ENCODE measurements at regions of chr20 and their contacts with region 1.

Region 1: GRCh38 chr20:18412221-18412901 is 54.5 kb downstream of the DZANK1 start:
- DNase-seq: peak in 1 of 14 experiments; percentile 4
- ATAC-seq: no peak
- H3K4me3 ChIP-seq: no peak overlapping the region
- H3K4me3 Mint-ChIP-seq: no peak overlapping the region
- H3K27ac ChIP-seq: no peak overlapping the region
- H3K27ac Mint-ChIP-seq: no peak overlapping the region
- H3K4me1 ChIP-seq: no peaks in the 10 kb centered on the region
- H3K4me1 Mint-ChIP-seq: no peaks in the 10 kb centered on the region
- H3K27me3 ChIP-seq: no peaks in the 10 kb centered on the region
- H3K27me3 Mint-ChIP-seq: no peaks in the 10 kb centered on the region
- CTCF ChIP-seq: no peak

Region 2: DNA sequence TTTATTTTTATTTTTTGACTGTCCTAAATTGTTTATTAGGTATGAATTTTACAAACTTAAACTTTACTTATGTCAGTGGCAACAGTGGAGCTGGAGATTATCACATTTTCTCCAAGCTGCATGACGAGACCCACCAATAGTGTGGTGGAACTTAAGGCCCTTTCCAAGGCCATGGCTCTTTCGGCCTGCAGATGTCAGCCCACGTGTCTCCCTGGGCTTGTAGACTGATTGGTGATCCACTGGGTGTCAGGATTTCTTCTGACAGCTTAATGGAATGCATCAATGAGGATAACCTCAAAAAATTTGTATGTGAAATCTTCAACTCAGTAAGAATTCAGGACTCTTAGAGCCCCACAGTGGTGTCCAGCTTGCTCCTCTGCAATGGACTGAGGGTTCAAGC is 322.3 kb before region 1 on chr20:
- CTCF ChIA-PET with region 1: no interaction called
- POLR2A ChIA-PET with region 1: no interaction called
- intact Hi-C with region 1: no loop called
- DNase-seq: no peak
- ATAC-seq: no peak
- H3K4me3 ChIP-seq: no peak overlapping the region
- H3K4me3 Mint-ChIP-seq: no peak overlapping the region
- H3K27ac ChIP-seq: no peak overlapping the region
- H3K27ac Mint-ChIP-seq: no peak overlapping the region
- H3K4me1 ChIP-seq: no peaks in the 10 kb centered on the region
- H3K4me1 Mint-ChIP-seq: no peaks in the 10 kb centered on the region
- H3K27me3 ChIP-seq: peaks cover 3 to 5% of the 10 kb centered on the region in 2 experiments
- H3K27me3 Mint-ChIP-seq: peaks cover 18% of the 10 kb centered on the region
- CTCF ChIP-seq: no peak

Region 3: DNA sequence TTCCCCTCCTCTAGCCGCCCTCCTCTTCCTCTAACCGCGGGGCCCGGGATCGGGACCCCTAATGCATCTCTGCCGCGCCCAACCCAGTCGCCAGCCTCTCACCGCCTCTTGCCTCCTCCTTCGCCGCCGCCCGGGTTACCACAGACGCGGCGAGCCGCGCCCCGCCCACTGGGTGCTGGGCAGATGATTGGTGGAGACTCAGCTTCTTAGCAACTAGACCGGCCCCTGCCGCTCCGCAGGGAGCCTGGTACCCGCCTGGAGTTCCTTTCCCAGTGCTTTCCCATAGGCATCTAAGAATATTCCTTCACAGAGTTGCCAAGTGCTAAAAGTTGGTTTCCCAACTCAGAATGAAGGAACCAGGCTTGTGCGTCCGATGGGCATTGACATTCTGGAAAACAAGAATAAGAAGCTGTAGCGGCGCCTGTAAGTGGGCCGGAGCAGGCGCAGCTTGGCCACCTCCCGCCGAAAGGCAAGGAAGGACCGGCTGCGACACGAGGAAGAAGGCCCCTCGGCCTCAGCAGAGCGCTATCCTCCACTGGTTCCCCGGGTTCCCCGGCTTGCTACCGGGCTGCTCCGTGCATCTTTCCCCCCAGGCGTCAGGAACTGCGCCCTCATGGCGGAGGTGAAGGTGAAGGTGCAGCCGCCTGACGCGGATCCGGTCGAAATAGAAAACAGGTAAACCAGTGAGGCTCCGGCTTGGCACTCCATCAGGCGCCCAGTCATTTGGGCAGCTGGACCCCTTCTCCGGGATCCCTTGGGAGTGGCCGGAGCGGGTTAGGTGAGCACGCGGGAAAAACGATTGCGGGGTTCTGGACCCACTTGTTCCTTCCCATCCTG is 54.8 kb after region 1 on chr20 and contains the starts of genes DZANK1 and POLR3F:
- CTCF ChIA-PET with region 1: no interaction called
- POLR2A ChIA-PET with region 1: no interaction called
- intact Hi-C with region 1: loop called in 1 of 2 experiments (anchors 1 kb)
- DNase-seq: peak; percentile 84 to 96 (median 90)
- ATAC-seq: peak; percentile 89
- H3K4me3 ChIP-seq: peak within 1 kb of the TSS; percentile 95
- H3K4me3 Mint-ChIP-seq: peak within 1 kb of the TSS; percentile 96
- H3K27ac ChIP-seq: peak within 1 kb of the TSS; percentile 77 to 91
- H3K27ac Mint-ChIP-seq: peak within 1 kb of the TSS; percentile 96
- H3K4me1 ChIP-seq: peaks cover 17% of the 10 kb centered on the region
- H3K4me1 Mint-ChIP-seq: peaks cover 39% of the 10 kb centered on the region
- H3K27me3 ChIP-seq: no peaks in the 10 kb centered on the region
- H3K27me3 Mint-ChIP-seq: no peaks in the 10 kb centered on the region
- CTCF ChIP-seq: no peak
- total RNA-seq, gene DZANK1: 1.8 to 1.9 TPM
- total RNA-seq, gene POLR3F: 7.9 to 8.8 TPM

Region 4: GRCh38 chr20:18524646-18525045 is 112.3 kb after region 1 on chr20:
- CTCF ChIA-PET with region 1: no interaction called
- POLR2A ChIA-PET with region 1: no interaction called
- intact Hi-C with region 1: loop called in 1 of 2 experiments (anchors 5 kb)
- DNase-seq: no peak
- ATAC-seq: no peak
- H3K4me3 ChIP-seq: no peak overlapping the region
- H3K4me3 Mint-ChIP-seq: no peak overlapping the region
- H3K27ac ChIP-seq: no peak overlapping the region
- H3K27ac Mint-ChIP-seq: no peak overlapping the region
- H3K4me1 ChIP-seq: no peaks in the 10 kb centered on the region
- H3K4me1 Mint-ChIP-seq: no peaks in the 10 kb centered on the region
- H3K27me3 ChIP-seq: no peaks in the 10 kb centered on the region
- H3K27me3 Mint-ChIP-seq: no peaks in the 10 kb centered on the region
- CTCF ChIP-seq: no peak

Region 5: DNA sequence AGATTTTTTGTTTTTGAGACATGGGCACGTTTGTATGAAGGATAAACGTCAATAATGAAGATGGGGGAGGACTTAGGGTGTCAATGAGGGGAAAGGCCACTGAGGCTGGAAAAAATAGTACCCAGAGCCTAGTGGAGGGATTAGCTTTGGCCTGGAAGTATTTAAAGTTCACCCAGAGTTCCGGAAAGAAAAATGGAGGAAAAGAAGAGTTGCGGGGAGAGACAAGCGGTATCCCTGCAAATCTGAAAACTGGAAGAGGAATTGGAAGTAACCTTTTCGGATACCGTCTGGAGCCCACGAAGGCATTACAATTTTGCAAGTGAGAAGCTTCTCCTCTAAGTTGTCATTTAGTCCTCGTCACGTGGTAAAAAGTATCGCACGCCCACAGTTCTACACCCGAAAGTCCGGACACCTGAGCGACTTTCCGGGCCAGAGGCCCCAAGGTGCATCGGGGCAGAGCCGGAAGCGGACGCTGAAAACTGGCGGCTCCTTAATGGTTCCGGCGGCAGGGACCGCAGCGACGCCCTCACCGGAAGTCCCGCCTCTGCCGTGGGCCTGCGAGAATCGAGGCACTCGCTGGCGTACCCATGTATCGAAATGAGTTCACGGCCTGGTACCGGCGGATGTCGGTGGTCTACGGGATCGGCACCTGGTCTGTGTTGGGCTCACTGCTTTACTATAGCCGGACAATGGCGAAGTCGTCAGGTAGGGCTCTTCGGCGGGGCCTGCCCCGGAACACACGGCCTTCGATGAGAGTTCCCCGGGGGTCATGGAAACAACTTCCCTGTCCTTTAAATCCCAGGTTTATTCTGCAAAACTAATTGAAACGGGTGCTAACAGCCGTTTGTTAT is 154.8 kb after region 1 on chr20 and contains the start of gene SMIM26:
- CTCF ChIA-PET with region 1: no interaction called
- POLR2A ChIA-PET with region 1: no interaction called
- intact Hi-C with region 1: loop called in 1 of 2 experiments (anchors 10 kb)
- DNase-seq: peak; percentile 90 to 97 (median 94)
- ATAC-seq: peak; percentile 99
- H3K4me3 ChIP-seq: peak within 1 kb of the TSS; percentile 91
- H3K4me3 Mint-ChIP-seq: peak within 1 kb of the TSS; percentile 99
- H3K27ac ChIP-seq: peak within 1 kb of the TSS; percentile 82 to 94
- H3K27ac Mint-ChIP-seq: peak within 1 kb of the TSS; percentile 100
- H3K4me1 ChIP-seq: peaks cover 20% of the 10 kb centered on the region
- H3K4me1 Mint-ChIP-seq: peaks cover 28% of the 10 kb centered on the region
- H3K27me3 ChIP-seq: no peaks in the 10 kb centered on the region
- H3K27me3 Mint-ChIP-seq: no peaks in the 10 kb centered on the region
- CTCF ChIP-seq: no peak
- total RNA-seq, gene SMIM26: 78.7 to 79.8 TPM

Region 6: DNA sequence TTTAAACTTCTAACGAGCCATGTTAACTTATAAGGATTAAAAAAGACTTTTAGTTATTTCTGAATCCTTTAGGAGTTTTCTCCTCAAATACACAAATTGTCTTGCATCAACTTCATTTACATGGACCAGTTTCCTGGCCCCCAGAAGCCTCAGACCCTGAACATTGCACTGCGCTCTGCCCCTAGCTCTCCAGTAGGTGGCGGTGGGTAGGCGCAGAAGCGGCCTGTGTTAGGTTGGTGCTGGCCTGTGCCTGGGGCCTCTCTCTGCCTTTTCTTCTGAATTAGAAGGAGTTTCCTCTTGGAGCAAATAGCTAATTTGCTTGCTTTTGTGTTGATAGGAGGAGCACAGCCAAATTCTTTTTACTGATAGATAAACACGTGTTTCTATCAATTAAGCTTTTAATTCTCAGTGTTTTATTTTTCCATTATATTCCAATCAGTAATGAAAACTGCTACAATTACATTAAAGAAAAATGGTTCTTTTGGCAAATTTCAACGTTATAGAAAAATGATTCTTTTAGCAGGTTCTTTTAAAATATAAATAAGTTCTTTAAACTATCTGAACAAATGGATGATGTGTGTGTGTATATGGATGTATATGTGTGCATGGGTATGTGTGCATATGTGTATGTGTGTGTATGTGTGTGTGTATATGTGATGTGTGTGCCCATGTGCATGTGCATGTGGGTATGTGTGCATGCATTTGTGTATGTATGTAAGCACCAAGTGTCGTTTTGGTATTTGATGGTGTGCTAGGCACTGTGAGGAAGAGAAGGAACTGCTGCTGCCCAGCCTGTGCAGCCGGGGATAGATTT is 220.0 kb after region 1 on chr20:
- CTCF ChIA-PET with region 1: no interaction called
- POLR2A ChIA-PET with region 1: no interaction called
- intact Hi-C with region 1: loop called in 1 of 2 experiments (anchors 2 kb)
- DNase-seq: peak; percentile 6 to 57 (median 36)
- ATAC-seq: peak; percentile 62
- H3K4me3 ChIP-seq: no peak overlapping the region
- H3K4me3 Mint-ChIP-seq: no peak overlapping the region
- H3K27ac ChIP-seq: no peak overlapping the region
- H3K27ac Mint-ChIP-seq: no peak overlapping the region
- H3K4me1 ChIP-seq: no peaks in the 10 kb centered on the region
- H3K4me1 Mint-ChIP-seq: no peaks in the 10 kb centered on the region
- H3K27me3 ChIP-seq: no peaks in the 10 kb centered on the region
- H3K27me3 Mint-ChIP-seq: no peaks in the 10 kb centered on the region
- CTCF ChIP-seq: peak; percentile 74

Region 7: GRCh38 chr20:19056909-19057308 is 644.5 kb after region 1 on chr20:
- CTCF ChIA-PET with region 1: no interaction called
- POLR2A ChIA-PET with region 1: no interaction called
- intact Hi-C with region 1: loop called in 1 of 2 experiments (anchors 5 kb)
- DNase-seq: peak in 2 of 14 experiments; percentile 7 to 12
- ATAC-seq: no peak
- H3K4me3 ChIP-seq: no peak overlapping the region
- H3K4me3 Mint-ChIP-seq: no peak overlapping the region
- H3K27ac ChIP-seq: no peak overlapping the region
- H3K27ac Mint-ChIP-seq: no peak overlapping the region
- H3K4me1 ChIP-seq: no peaks in the 10 kb centered on the region
- H3K4me1 Mint-ChIP-seq: no peaks in the 10 kb centered on the region
- H3K27me3 ChIP-seq: peaks cover 0 to 3% of the 10 kb centered on the region in 2 experiments
- H3K27me3 Mint-ChIP-seq: peaks cover 10% of the 10 kb centered on the region
- CTCF ChIP-seq: no peak

Region 8: GRCh38 chr20:19995220-19995863 is 1583.0 kb after region 1 on chr20:
- CTCF ChIA-PET with region 1: no interaction called
- POLR2A ChIA-PET with region 1: no interaction called
- intact Hi-C with region 1: loop called (anchors 2 to 10 kb)
- DNase-seq: peak in 7 of 14 experiments; percentile 6 to 73 (median 54)
- ATAC-seq: peak; percentile 61
- H3K4me3 ChIP-seq: no peak overlapping the region
- H3K4me3 Mint-ChIP-seq: no peak overlapping the region
- H3K27ac ChIP-seq: no peak overlapping the region
- H3K27ac Mint-ChIP-seq: no peak overlapping the region
- H3K4me1 ChIP-seq: no peaks in the 10 kb centered on the region
- H3K4me1 Mint-ChIP-seq: no peaks in the 10 kb centered on the region
- H3K27me3 ChIP-seq: no peaks in the 10 kb centered on the region
- H3K27me3 Mint-ChIP-seq: peaks cover 23% of the 10 kb centered on the region
- CTCF ChIP-seq: peak; percentile 81